ENCODE measurements at regions of chr1 and their contacts with region 1.

Region 1: DNA sequence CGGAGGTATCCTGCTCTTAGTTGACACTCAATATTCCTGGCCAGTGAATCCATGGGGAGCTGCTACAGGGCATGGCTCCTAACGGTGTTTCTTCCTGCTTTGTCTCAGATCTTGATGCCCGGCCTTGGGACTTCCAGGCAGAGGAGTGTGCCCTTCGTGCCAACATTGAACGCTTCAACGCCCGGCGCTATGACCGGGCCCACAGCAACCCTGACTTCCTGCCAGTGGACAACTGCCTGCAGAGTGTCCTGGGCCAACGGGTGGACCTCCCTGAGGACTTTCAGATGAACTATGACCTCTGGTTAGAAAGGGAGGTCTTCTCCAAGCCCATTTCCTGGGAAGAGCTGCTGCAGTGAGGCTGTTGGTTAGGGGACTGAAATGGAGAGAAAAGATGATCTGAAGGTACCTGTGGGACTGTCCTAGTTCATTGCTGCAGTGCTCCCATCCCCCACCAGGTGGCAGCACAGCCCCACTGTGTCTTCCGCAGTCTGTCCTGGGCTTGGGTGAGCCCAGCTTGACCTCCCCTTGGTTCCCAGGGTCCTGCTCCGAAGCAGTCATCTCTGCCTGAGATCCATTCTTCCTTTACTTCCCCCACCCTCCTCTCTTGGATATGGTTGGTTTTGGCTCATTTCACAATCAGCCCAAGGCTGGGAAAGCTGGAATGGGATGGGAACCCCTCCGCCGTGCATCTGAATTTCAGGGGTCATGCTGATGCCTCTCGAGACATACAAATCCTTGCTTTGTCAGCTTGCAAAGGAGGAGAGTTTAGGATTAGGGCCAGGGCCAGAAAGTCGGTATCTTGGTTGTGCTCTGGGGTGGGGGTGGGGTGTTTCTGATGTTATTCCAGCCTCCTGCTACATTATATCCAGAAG is 16.7 kb downstream of the ALX3 start:
- DNase-seq: peak; percentile 58 to 85 (median 78)
- H3K4me3 ChIP-seq: no peak overlapping the region
- H3K27ac ChIP-seq: no peak overlapping the region
- H3K4me1 ChIP-seq: no peaks in the 10 kb centered on the region
- H3K27me3 ChIP-seq: no peaks in the 10 kb centered on the region
- CTCF ChIP-seq: peak; percentile 86 to 94 (median 87)
- EP300 ChIP-seq: no peak
- POLR2A ChIP-seq: no peak

Region 2: DNA sequence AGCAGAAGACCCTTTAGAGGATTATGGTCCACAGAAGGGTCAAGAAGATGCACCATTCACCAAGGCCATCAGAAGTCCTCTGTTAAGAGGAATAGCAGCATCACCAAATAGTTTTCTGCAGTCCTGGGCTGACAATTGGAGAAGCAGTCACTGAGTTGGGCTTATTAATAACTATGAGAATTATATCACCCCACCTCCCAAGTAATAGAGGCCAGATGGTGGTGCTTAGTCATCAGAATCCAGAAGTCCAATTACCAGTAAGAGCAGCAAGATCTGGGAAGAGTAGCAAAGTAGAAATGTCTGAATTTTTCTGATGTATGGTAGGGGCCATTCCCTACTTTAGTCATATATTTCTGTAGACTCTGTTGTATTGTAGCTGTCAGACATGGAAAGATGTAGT is 621.5 kb before region 1 on chr1:
- intact Hi-C with region 1: no loop called
- DNase-seq: no peak
- H3K4me3 ChIP-seq: no peak overlapping the region
- H3K27ac ChIP-seq: no peak overlapping the region
- H3K4me1 ChIP-seq: no peaks in the 10 kb centered on the region
- H3K27me3 ChIP-seq: no peaks in the 10 kb centered on the region
- CTCF ChIP-seq: no peak
- EP300 ChIP-seq: no peak
- POLR2A ChIP-seq: no peak

Region 3: GRCh38 chr1:109783429-109783831 is 270.4 kb before region 1 on chr1:
- intact Hi-C with region 1: no loop called
- DNase-seq: peak in 3 of 5 donors; percentile 15 to 35 (median 17)
- H3K4me3 ChIP-seq: no peak overlapping the region
- H3K27ac ChIP-seq: peak overlapping the region in 1 of 2 donors; percentile 41
- H3K4me1 ChIP-seq: peaks cover 12% of the 10 kb centered on the region
- H3K27me3 ChIP-seq: no peaks in the 10 kb centered on the region
- CTCF ChIP-seq: no peak
- EP300 ChIP-seq: no peak
- POLR2A ChIP-seq: no peak

Region 4: DNA sequence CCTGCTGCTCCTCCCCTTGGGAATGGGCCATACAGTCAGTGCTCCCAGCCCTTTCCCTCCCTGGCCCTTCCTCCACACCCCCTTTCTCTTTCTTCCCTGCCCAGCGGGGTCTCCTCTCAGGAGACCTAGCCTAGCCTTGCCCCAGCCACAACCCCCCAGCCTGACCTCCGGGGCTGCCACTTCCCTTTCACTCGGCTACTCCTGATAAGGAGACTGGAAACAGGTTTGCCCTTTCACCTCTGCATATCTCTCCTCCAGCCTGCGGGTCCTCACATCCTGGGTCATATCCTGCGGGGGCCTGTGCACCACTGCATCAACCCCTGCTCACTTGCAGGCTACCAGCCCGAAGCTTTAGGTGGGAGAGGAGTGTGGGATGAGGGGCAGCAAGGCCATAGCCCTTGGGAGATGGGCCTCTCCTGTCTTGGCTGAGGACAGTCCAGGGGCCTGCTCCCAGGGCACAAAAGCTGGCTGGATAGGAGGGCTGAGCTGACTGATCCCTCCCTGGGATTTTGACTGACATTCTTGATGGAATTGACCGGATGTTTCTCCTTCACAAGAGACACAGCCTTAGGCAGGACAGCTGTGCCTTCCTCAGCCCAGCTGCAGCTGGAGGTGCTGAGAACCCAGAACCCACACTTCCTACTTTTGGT is 35.9 kb after region 1 on chr1:
- intact Hi-C with region 1: loop called in 1 of 4 experiments (anchors 5 kb)
- DNase-seq: no peak
- H3K4me3 ChIP-seq: no peak overlapping the region
- H3K27ac ChIP-seq: no peak overlapping the region
- H3K4me1 ChIP-seq: peaks cover 5% of the 10 kb centered on the region
- H3K27me3 ChIP-seq: no peaks in the 10 kb centered on the region
- CTCF ChIP-seq: no peak
- EP300 ChIP-seq: no peak
- POLR2A ChIP-seq: no peak

Region 5: DNA sequence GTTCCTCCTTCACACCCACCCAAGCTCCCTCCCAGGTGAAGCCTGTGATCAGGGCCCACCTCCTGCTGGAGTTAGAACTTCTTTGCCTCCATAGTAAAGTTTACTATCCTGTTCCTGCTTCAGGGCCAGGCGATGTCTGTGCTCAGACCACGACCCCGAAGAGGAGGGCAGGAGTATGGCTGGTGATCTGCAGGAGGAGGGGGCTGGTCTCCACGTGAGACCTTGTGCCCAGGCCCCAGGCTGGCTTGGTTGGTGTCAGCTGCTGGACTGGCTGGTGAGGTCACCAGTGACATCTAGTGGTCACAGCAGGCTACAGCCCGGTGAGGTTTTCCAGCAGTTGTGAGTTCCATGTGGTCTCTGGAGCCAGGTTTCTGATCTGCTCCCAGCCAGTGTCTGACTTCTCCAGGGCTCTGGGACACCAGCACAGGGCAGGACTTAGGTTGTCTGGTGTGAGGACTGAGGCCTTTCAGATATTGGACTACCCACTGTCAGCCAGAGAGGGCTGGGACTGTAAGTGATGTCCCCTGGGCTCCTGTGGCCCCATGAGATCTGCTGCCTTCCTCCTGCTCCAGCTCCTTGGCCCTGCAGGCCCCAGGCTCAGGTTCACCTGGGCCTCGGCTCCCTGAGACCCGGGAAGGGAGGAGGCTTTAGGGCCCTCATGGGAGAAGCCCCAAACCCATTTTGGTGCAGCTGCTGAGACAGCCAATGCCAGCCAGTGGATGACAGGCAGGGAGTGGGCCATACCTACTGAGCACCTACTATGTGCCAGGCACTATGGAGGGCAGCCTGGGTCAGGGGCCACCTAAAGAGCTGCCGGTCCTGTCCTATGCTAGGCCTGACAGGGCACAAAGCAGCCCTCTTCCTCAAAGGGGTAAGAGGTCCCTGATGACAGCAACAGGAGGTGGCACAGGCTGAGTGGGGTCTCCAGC is 52.5 kb after region 1 on chr1:
- intact Hi-C with region 1: loop called (anchors 2 to 10 kb)
- DNase-seq: peak; percentile 63 to 80 (median 76)
- H3K4me3 ChIP-seq: no peak overlapping the region
- H3K27ac ChIP-seq: no peak overlapping the region
- H3K4me1 ChIP-seq: no peaks in the 10 kb centered on the region
- H3K27me3 ChIP-seq: no peaks in the 10 kb centered on the region
- CTCF ChIP-seq: peak; percentile 84 to 93 (median 85)
- EP300 ChIP-seq: no peak
- POLR2A ChIP-seq: no peak